Right cardiac atrium (tissue), 5 donors: ENCODE measurements at regions of chr1 and their contacts with region 1.

Region 1: DNA sequence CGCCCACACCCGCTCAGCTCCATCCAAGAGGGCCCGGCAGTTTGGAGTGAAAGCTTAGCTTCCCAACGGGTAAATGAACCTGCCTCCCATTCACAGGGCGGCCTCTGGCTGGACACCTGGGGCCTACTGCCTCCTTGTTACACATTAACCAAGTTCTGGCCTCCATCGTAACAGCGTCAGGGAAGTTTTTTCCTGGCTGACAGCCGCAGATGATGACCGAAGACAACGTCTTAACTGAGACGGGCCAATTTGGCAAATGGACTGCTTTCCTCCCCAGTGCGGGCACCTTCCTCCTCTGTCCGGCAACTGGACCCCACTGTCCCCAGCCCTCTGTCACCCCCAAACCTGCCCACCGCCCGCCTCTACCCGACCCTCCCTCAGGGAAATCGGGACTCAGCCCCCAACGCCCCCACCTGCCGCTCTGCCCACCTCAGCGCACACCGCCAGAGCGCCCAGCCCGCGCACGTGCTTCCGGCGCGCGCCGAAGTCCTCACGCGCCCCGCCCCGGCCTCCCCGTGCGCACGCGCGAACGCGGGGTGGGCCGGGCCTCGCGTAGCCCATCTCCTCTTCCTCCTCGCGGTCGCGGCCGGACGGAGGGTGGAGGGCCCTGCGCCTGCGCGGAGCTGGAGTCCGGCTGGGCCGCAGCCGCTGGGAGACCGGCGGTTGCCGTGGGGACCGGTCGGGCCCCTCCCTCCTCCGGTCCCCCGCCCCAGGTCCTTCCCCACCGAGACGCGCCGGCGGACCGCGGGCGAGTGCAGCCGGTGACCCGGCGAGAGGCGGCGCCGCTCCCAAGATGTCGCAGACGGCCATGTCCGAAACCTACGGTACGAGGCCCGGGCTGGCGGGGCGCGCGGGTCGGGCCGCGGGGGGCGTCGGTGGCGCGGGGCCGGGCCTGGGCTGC is at the start of gene RAB4A:
- DNase-seq: peak; percentile 92 to 96 (median 95)
- ATAC-seq: peak; percentile 97 to 98
- H3K4me3 ChIP-seq: peak within 1 kb of the TSS; percentile 69
- H3K27ac ChIP-seq: peak within 1 kb of the TSS; percentile 64
- H3K4me1 ChIP-seq: peaks cover 9% of the 10 kb centered on the region
- H3K27me3 ChIP-seq: no peaks in the 10 kb centered on the region
- total RNA-seq, gene RAB4A: 95.5 to 114 (median 103) TPM

Region 2: GRCh38 chr1:229341774-229342655 is 71.2 kb after region 1 on chr1:
- intact Hi-C with region 1: loop called in 1 of 4 experiments (anchors 5 kb)
- DNase-seq: peak; percentile 85 to 94 (median 94)
- ATAC-seq: peak; percentile 97
- H3K4me3 ChIP-seq: peak overlapping the region; percentile 81
- H3K27ac ChIP-seq: peak overlapping the region; percentile 46
- H3K4me1 ChIP-seq: peaks cover 2% of the 10 kb centered on the region
- H3K27me3 ChIP-seq: no peaks in the 10 kb centered on the region